Mammary epithelial cell (primary cell): ENCODE measurements at regions of chr20 and their contacts with region 1.

Region 1: GRCh38 chr20:10558635-10559187 is 115.1 kb downstream of the JAG1 start:
- DNase-seq: peak; percentile 97
- H3K4me3 ChIP-seq: no peak overlapping the region
- H3K27ac ChIP-seq: peak overlapping the region; percentile 75
- H3K4me1 ChIP-seq: peaks cover 45% of the 10 kb centered on the region
- H3K27me3 ChIP-seq: no peaks in the 10 kb centered on the region
- CTCF ChIP-seq: no peak

Region 2: DNA sequence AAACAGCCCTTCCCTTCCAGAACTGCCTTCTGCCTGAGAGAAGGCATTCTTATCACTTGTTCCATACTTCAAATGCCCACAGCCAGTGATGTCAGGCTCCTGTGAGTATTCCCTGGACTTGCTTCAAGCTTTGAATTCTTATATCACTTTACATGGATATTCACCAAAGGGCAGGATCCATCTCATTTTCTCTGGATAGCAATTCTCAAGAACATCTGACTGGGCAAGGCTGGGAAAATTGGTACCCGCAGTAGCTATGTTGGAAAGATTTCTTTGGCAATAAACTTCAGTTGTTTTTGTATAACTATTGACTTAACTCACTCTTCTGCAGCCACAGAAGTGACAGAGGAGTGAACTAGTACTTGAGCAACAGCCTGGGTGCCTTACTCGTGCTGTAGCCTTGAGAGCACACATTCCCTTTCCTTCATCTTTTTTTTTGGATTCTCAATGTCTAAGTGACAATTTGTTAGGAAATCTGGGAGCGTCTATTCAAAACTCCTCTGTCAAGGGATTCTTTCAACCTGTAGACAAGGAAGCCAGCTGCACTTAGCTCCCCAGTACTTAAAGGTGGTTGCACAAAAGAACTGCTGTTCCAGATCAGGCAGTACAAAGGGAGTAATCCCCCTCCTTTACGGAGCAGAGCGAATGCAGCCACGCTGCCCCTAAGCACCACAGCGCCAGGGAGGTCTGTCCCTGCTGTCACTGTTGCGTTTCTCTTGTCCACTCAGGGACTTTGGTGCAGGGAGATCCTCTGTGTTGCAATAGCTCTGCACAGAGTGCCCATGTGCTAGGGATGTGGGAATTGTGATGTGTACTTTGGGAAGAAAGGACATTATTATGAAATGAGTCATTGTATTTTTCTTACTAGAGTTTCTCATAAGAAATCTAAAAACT is 45.5 kb after region 1 on chr20:
- CTCF ChIA-PET with region 1: no interaction called
- dilution Hi-C with region 1: loop called (anchors 5 kb)
- in situ Hi-C with region 1: no loop called
- intact Hi-C with region 1: no loop called
- DNase-seq: peak; percentile 86
- H3K4me3 ChIP-seq: no peak overlapping the region
- H3K27ac ChIP-seq: peak overlapping the region; percentile 70
- H3K4me1 ChIP-seq: peaks cover 24% of the 10 kb centered on the region
- H3K27me3 ChIP-seq: no peaks in the 10 kb centered on the region
- CTCF ChIP-seq: no peak

Region 3: DNA sequence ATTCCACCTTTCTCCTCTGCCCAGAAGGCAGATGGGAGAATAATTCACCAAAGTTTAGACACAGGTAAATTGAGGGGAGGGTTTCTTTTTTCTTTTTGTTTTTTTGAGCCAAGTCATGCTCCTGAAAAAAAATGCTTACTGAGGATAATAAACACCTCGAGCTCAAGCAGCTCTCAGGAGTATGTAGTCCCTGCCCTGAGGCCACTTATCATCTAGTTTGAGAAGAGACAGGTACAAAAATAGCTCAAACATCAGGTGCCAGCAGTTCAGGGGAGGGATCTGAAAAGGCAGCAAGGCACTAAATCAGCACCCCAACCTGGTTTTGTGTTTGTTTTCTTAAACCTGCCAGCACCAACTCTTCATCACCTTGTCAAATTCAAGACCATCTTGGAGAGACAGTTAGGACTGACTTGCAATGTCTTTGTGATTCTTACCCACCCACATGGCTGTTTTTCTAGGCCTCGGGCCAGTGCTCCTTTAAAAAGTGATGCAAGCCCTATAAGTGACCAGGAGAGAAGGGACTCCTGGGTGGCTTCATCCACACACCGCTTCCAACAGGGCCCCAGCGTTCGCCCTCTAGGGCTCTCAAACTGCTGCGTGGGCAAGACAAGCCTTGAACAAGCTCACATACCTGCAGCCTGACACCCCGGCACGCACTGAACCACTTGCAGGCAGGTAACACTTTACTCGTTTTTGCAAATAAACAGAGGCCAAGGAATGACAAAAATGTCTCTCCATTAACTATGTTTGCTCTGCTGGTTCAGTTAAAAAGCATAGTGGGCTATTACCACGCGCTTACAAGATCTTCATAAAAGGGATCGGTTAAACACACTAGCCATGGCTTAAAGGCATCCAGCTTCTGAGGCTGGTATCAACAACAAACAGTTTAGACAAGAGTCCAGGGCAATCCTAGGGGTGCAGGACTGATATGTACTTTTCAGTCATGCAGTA is 101.2 kb after region 1 on chr20:
- CTCF ChIA-PET with region 1: interaction called, 13 read pairs
- dilution Hi-C with region 1: no loop called
- in situ Hi-C with region 1: no loop called
- intact Hi-C with region 1: no loop called
- DNase-seq: no peak
- H3K4me3 ChIP-seq: no peak overlapping the region
- H3K27ac ChIP-seq: peak overlapping the region; percentile 50
- H3K4me1 ChIP-seq: peaks cover 55% of the 10 kb centered on the region
- H3K27me3 ChIP-seq: no peaks in the 10 kb centered on the region
- CTCF ChIP-seq: no peak